ENCODE measurements at regions of chr10 and their contacts with region 1.

Region 1: GRCh38 chr10:71835671-71836595 is 15.1 kb downstream of the PSAP start:
- DNase-seq: peak; percentile 65 to 85 (median 81)
- ATAC-seq: peak; percentile 20 to 60 (median 52)
- H3K4me3 ChIP-seq: peak overlapping the region in 2 of 12 donors; percentile 1 to 28
- H3K27ac ChIP-seq: peak overlapping the region; percentile 61 to 89 (median 78)
- H3K4me1 ChIP-seq: peaks cover 30 to 98% (median 82%) of the 10 kb centered on the region in 12 donors
- H3K27me3 ChIP-seq: no peaks in the 10 kb centered on the region
- CTCF ChIP-seq: no peak
- POLR2A ChIP-seq: no peak

Region 2: DNA sequence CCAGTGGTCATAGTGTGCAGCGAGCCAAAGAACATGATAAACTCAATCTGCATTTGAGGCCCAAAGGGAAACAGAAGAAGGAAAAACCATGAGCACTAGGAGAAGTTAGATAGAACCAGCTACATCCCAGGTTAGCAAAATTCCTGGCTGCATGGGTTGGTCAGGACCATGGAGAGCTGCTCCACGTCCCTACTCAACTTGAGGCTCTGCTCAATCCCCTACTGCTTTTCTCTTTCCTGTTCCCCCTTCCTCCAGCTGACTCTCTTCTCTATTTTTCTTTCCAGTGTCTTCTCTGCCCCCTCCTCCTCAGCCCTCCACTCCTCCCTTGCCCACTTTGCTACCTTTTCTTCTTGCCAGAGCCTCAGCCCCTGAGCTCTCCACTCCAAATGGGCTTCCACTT is 40.7 kb before region 1 on chr10:
- intact Hi-C with region 1: no loop called
- DNase-seq: peak in 1 of 5 donors; percentile 37
- ATAC-seq: peak in 2 of 4 donors; percentile 43 to 52
- H3K4me3 ChIP-seq: no peak overlapping the region
- H3K27ac ChIP-seq: no peak overlapping the region
- H3K4me1 ChIP-seq: peaks cover 0 to 10% (median 0%) of the 10 kb centered on the region in 12 donors
- H3K27me3 ChIP-seq: no peaks in the 10 kb centered on the region
- CTCF ChIP-seq: no peak
- POLR2A ChIP-seq: no peak

Region 3: DNA sequence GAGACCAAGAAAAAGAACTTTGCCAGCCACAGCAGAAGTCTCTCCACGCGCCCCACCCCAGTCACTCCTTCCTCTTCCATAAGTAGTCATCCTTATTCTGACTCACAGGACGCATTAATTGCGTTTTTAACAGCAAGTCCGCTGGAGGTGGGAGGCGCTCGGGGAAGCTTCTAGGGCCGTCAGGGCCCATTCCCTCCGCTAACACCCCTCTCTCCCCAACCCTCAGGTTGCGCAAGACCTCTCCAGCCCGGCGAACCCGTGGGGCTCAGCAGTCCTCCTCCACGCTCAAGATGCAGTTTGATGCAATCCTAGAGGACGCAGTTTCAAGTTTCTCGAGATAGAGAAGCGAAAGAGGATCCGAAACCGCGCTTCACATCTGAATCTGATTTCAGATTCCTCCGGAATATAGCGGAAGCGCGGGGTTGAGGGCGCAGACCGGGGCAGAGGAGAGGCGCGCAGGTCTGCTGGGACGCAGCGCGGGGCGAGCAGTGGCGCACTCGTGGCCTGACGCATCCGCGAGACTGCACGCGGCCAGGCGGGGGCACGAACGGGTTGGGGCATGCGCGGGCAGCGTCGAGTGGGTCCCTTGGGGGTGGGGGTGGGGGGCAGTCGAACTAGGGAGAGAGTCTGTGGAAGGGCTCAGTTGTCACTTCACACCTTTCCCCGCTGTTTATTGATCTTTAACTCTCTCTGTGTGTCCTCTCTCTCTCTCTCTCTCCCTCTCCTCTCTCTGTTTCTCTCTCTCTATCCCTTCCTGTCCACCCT is 52.9 kb after region 1 on chr10:
- intact Hi-C with region 1: loop called in 9 of 10 experiments (anchors 5 to 10 kb)
- DNase-seq: peak; percentile 78 to 91 (median 87)
- ATAC-seq: peak; percentile 76 to 92 (median 92)
- H3K4me3 ChIP-seq: peak overlapping the region; percentile 26 to 70 (median 57)
- H3K27ac ChIP-seq: peak overlapping the region in 11 of 12 donors; percentile 50 to 96 (median 65)
- H3K4me1 ChIP-seq: peaks cover 0 to 61% (median 10%) of the 10 kb centered on the region in 12 donors
- H3K27me3 ChIP-seq: no peaks in the 10 kb centered on the region
- CTCF ChIP-seq: peak in 3 of 12 donors; percentile 5 to 27 (median 15)
- POLR2A ChIP-seq: peak in 1 of 2 donors; percentile 37

Region 4: GRCh38 chr10:71893920-71894319 is 58.0 kb after region 1 on chr10:
- intact Hi-C with region 1: loop called (anchors 5 to 10 kb)
- DNase-seq: no peak
- ATAC-seq: no peak
- H3K4me3 ChIP-seq: no peak overlapping the region
- H3K27ac ChIP-seq: no peak overlapping the region
- H3K4me1 ChIP-seq: peaks cover 0 to 54% (median 7%) of the 10 kb centered on the region in 12 donors
- H3K27me3 ChIP-seq: no peaks in the 10 kb centered on the region
- CTCF ChIP-seq: no peak
- POLR2A ChIP-seq: no peak

Region 5: DNA sequence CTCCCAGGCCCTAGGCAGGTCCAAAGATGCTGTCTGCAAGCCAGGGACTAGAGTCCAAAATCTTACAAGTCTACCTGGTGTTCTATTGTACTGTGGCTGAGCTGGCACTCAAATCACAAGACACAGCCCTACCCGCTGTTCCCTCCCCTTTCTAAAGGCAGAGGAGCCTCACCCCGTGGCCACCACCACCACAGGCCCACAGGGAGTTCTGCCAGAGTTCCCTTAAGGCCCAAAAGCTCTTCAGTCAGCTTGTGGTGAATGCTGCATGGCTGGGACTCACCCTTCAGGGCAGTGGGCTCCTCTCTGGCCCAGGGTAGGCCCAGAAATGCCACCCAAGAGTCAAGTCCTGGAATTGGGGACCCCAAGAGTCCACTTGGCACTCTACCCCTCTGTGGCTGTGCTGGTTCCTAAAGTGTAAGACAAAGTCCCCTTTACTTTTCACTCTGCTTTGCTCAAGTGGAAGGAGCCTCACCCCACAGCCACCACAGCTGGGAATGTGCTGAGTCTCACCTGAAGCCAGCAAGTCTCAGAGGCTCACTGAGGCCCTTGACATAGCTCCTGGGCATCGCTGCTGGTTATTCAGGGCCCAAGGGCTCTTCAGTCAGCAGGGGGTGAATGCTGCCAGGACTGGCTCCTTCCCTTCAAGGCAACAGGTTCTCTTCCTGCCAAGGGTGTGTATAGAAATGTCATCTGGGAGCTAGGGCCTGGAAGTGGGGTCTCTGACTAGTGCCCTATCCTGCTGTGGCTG is 63.9 kb after region 1 on chr10:
- intact Hi-C with region 1: loop called in 6 of 10 experiments (anchors 5 to 10 kb)
- DNase-seq: peak in 1 of 5 donors; percentile 9
- ATAC-seq: no peak
- H3K4me3 ChIP-seq: no peak overlapping the region
- H3K27ac ChIP-seq: no peak overlapping the region
- H3K4me1 ChIP-seq: peaks cover 0 to 16% (median 0%) of the 10 kb centered on the region in 12 donors
- H3K27me3 ChIP-seq: no peaks in the 10 kb centered on the region
- CTCF ChIP-seq: no peak
- POLR2A ChIP-seq: no peak

Region 6: DNA sequence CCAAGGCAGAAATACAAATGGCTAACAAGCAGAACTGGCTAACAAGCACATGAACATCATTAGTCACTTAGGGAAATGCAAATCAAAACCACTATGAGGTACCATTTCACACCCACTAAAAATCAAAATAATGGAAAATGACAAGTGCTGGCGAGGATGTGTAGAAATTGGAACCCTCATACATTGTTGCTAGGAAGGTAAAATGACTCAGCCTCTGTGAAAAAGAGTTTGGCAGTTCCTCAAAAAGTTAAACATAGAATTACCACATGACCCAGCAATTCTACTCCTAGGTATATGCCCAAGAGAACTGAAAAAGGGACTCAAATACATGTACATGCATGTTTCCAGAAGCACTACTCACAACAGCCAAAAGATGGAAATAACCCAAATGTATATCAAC is 327.0 kb after region 1 on chr10:
- intact Hi-C with region 1: no loop called
- DNase-seq: no peak
- ATAC-seq: peak in 1 of 4 donors; percentile 49
- H3K4me3 ChIP-seq: no peak overlapping the region
- H3K27ac ChIP-seq: peak overlapping the region in 1 of 12 donors; percentile 7
- H3K4me1 ChIP-seq: peaks cover 0 to 26% (median 2%) of the 10 kb centered on the region in 12 donors
- H3K27me3 ChIP-seq: no peaks in the 10 kb centered on the region
- CTCF ChIP-seq: no peak
- POLR2A ChIP-seq: no peak

Measured in heart left ventricle (tissue), 16 donors.